Tibial artery (tissue), 4 donors: ENCODE measurements at regions of chr10 and their contacts with region 1.

Region 1: GRCh38 chr10:101031128-101031795 is at the starts of genes PDZD7 and SFXN3:
- DNase-seq: peak; percentile 93 to 98
- H3K4me3 ChIP-seq: peak within 1 kb of the TSS; percentile 69 to 88
- H3K27ac ChIP-seq: peak within 1 kb of the TSS; percentile 99
- H3K4me1 ChIP-seq: peaks cover 0 to 36% (median 22%) of the 10 kb centered on the region in 4 donors
- H3K27me3 ChIP-seq: peaks cover 0 to 8% of the 10 kb centered on the region in 2 donors
- CTCF ChIP-seq: no peak

Region 2: GRCh38 chr10:100976910-100977309 is 54.4 kb before region 1 on chr10:
- intact Hi-C with region 1: no loop called
- DNase-seq: no peak
- H3K4me3 ChIP-seq: no peak overlapping the region
- H3K27ac ChIP-seq: no peak overlapping the region
- H3K4me1 ChIP-seq: no peaks in the 10 kb centered on the region
- H3K27me3 ChIP-seq: no peaks in the 10 kb centered on the region
- CTCF ChIP-seq: no peak

Region 3: DNA sequence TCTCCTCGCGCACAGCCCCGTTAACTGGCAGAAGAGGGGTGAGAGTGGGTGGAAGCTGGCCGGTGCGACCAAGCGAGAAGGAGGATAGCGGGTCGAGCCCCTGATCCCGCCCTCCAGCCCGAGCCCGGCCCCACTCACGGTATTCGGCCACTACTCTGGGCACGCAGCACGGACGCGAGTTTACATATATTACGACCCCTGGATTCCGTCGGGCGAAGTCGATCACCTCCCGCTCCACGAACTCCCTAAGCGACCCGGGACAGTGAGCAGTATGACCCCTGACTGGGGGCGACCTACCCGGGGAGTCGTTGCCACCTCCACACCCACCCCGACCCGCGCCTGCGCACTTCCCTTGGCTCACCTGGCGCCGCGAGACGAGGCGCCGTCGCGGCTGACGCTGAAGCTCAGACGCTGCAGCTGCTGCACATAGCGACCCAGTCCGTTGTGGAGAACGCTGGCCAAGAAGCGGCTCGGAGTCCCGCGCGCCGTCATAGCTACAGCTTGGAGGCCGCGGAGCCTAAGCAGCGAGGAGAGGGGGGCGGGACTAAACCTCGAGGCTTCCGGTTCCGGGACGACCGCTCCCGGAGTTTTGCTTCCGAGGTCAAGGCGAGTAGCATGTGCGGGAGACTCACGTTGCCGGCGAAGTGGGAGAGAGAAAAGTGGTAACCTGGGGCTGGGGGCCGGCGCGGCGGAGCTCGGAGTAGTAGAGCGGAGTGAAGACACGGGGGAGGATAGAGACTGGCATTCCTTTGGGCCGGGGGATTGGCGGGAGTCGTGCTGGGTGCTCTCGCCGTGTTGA is 44.1 kb before region 1 on chr10 and contains the starts of genes MRPL43 and TWNK:
- intact Hi-C with region 1: loop called (anchors 5 kb)
- DNase-seq: peak; percentile 80 to 89
- H3K4me3 ChIP-seq: peak within 1 kb of the TSS; percentile 85 to 94
- H3K27ac ChIP-seq: peak within 1 kb of the TSS; percentile 82 to 85
- H3K4me1 ChIP-seq: peaks cover 0 to 36% (median 26%) of the 10 kb centered on the region in 4 donors
- H3K27me3 ChIP-seq: no peaks in the 10 kb centered on the region
- CTCF ChIP-seq: no peak

Region 4: GRCh38 chr10:101067356-101068083 is 36.3 kb after region 1 on chr10:
- intact Hi-C with region 1: loop called (anchors 5 kb)
- DNase-seq: peak; percentile 76 to 86
- H3K4me3 ChIP-seq: peak overlapping the region; percentile 57 to 64
- H3K27ac ChIP-seq: peak overlapping the region; percentile 66 to 95
- H3K4me1 ChIP-seq: peaks cover 5 to 46% (median 33%) of the 10 kb centered on the region in 4 donors
- H3K27me3 ChIP-seq: peaks cover 0 to 12% of the 10 kb centered on the region in 2 donors
- CTCF ChIP-seq: peak; percentile 89 to 92